ENCODE measurements at regions of chr9 and their contacts with region 1.

Region 1: GRCh38 chr9:21141427-21141882 is at the start of gene IFNW1:
- DNase-seq: no peak
- ATAC-seq: peak; percentile 87
- total RNA-seq, gene IFNW1: not detected

Region 2: DNA sequence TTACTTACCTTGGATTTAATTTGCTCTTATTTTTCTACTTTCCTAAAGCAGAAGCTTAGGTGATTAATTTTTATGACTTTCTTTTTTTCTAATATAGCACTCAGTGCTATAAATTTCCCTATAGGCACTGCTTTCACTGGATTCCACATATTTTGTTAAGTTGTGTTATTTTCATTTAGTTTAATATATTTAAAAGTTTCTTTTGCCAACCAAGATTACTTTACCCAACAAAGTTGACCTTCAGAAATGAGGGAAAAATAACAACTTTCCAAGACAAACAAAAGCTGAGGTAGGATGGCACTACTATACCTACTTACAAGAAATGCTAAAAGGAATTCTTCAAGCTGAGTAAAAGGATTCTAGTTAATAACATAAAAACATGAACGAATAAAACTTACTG is 54.9 kb before region 1 on chr9:
- intact Hi-C with region 1: loop called (anchors 2 kb)
- DNase-seq: no peak
- ATAC-seq: no peak

Region 3: GRCh38 chr9:21294325-21294724 is 152.9 kb after region 1 on chr9:
- intact Hi-C with region 1: no loop called
- DNase-seq: no peak
- ATAC-seq: no peak